Heart left ventricle (tissue), 16 donors: ENCODE measurements at regions of chr10 and their contacts with region 1.

Region 1: DNA sequence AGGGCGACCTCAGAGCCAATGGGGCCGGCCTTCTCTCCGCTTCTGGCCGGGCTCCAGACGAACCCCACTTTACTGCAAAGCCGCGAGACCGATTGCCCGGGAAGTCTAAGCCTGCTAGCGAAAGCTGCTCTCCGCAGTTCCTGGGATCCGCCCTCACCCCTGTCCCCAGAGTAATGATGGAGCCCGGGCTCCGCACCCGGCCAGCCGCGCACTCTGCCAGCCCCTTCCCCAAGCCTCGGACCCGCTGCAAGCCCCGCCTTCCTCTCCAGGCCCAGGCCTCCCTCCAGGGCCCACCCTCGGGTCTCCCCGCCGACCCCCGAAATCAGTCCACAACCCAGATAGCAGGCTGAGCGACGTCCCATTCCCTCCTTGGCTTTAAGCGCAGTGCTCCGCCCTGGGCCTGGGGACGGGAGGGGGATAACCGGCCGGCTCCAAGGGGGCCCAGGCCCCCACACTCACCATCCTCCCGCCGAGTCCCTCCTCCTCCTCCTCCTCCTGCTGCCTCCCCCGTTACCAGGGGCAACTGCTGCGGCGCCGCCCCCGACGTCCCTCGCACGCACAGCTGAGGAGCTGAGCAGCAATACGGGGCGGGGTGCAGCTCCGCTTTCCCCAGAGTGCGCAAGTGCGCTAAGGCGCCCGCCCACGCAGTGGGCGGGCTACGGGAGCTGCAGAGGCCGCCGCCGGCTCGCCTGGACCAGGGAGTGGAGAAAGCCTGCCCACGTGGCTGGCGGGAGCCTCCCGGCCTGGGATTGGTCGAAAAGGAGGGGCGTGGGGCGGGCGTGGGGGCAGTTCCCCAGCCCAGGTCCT is at the start of gene ARL3:
- DNase-seq: peak; percentile 97 to 99 (median 99)
- ATAC-seq: peak; percentile 98 to 99 (median 98)
- H3K4me3 ChIP-seq: peak within 1 kb of the TSS; percentile 70 to 100 (median 90)
- H3K27ac ChIP-seq: peak within 1 kb of the TSS; percentile 2 to 92 (median 83)
- H3K4me1 ChIP-seq: peaks cover 0 to 46% (median 22%) of the 10 kb centered on the region in 12 donors
- H3K27me3 ChIP-seq: no peaks in the 10 kb centered on the region
- CTCF ChIP-seq: peak in 7 of 12 donors; percentile 1 to 46 (median 38)
- POLR2A ChIP-seq: peak in 1 of 2 donors; percentile 74
- total RNA-seq, gene ARL3: 5.8 to 17.0 (median 12.6) TPM

Region 2: GRCh38 chr10:102678842-102679289 is 35.2 kb before region 1 on chr10:
- intact Hi-C with region 1: loop called in 5 of 10 experiments (anchors 5 kb)
- DNase-seq: peak; percentile 70 to 85 (median 77)
- ATAC-seq: peak; percentile 54 to 71 (median 71)
- H3K4me3 ChIP-seq: peak overlapping the region in 3 of 12 donors; percentile 18 to 24 (median 21)
- H3K27ac ChIP-seq: peak overlapping the region in 10 of 12 donors; percentile 0 to 71 (median 54)
- H3K4me1 ChIP-seq: peaks cover 9 to 58% (median 51%) of the 10 kb centered on the region in 12 donors
- H3K27me3 ChIP-seq: no peaks in the 10 kb centered on the region
- CTCF ChIP-seq: peak; percentile 42 to 76 (median 70)
- POLR2A ChIP-seq: no peak

Region 3: GRCh38 chr10:103333925-103334520 is 620.0 kb after region 1 on chr10:
- intact Hi-C with region 1: loop called in 1 of 10 experiments (anchors 10 kb)
- DNase-seq: no peak
- ATAC-seq: no peak
- H3K4me3 ChIP-seq: no peak overlapping the region
- H3K27ac ChIP-seq: no peak overlapping the region
- H3K4me1 ChIP-seq: no peaks in the 10 kb centered on the region
- H3K27me3 ChIP-seq: no peaks in the 10 kb centered on the region
- CTCF ChIP-seq: peak; percentile 39 to 69 (median 61)
- POLR2A ChIP-seq: no peak